Activated naive CD4-positive, alpha-beta T cell treated with anti-CD3 and anti-CD28 coated beads for 36 hours (primary cell): ENCODE measurements at regions of chr7 and their contacts with region 1.

Region 1: DNA sequence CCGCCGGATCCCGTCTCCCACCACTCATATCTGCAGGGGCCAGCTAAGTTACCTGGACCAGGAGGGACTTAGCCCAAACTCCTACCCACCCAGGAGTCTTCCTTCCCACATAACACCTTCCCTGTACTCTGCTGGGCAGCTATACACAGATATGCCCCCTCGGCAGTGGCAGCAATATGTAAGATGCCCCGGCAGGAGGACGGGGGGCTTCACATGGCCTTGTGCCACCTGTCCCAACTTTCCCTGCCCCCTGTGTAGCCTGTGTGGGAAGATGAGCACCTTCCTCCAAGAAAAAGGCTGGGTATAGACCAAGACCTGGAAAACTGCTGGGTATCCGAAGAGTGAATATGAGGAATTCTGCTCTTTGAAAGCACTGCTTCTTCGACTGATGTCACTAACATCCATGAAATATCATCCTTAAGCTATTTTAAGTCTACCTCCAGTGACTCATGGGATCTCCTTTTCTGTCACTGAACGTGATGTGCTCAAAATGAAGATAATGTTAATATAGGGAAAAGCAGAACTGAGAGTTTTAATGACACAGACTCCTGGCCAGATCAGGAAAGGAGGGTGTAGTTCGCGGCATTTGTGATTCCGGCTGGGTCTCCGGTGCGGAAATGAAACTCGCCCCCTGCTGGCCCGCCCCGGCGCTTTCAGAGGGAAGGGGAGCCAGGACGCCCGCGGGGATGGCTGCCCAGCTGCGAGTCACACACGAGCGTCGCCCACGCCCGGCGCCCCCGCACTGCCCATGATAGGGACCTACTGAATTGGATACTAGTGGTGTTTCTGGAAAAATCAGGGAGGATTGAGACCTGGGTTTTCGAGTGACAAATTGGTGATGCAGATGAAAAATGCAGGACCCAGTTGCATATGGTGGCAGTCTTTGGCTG is 256.9 kb upstream of the NFE2L3 start:
- DNase-seq: peak; percentile 74
- H3K4me3 Mint-ChIP-seq: peak overlapping the region; percentile 6
- H3K27ac Mint-ChIP-seq: no peak overlapping the region
- H3K4me1 Mint-ChIP-seq: peaks cover 25% of the 10 kb centered on the region
- H3K27me3 Mint-ChIP-seq: peaks cover under 1% of the 10 kb centered on the region

Region 2: DNA sequence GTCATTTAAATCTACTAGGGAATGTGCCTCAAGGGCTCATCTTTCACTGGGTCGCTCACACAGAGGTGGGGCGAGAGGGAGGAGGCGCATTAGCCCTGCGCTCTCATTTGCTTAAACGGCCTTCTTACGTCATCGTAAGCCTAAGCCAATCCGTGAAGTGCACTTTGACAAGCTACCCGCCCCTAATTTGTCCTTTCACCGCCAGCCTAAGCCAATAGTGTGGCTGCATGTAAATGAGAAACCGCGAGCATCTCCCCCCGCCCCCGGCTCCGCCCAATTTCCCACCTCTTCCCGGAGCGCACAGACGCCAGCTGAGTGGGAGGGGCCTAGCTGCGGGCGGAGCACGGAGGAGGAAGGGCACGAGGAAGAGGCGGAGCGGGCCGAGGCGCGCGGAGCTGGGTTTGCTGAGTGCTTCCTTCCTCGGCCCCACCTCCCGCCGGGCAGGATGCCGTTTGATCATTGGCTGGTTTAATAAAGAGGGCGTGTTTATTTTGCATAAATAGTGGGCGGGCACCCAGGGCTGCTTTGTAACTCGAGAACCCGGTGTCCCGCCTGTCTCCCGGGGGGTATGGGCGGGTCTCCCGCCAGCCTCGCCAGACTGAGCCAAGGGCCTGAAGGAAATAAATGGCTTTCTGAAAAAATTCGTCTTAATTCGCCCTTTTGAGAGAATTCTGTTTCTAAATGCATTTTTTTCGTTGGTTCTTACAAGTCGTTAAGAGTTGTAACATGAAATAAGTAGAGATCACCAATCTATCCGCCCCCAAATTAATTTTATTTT is 32.7 kb before region 1 on chr7:
- CTCF ChIA-PET with region 1: interaction called, 5 read pairs
- intact Hi-C with region 1: loop called (anchors 2 kb)
- DNase-seq: peak; percentile 99
- H3K4me3 Mint-ChIP-seq: peak overlapping the region; percentile 58
- H3K27ac Mint-ChIP-seq: peak overlapping the region; percentile 38
- H3K4me1 Mint-ChIP-seq: peaks cover 22% of the 10 kb centered on the region
- H3K27me3 Mint-ChIP-seq: peaks cover 70% of the 10 kb centered on the region

Region 3: GRCh38 chr7:25923741-25924460 is 28.8 kb after region 1 on chr7:
- CTCF ChIA-PET with region 1: no interaction called
- intact Hi-C with region 1: no loop called
- DNase-seq: no peak
- H3K4me3 Mint-ChIP-seq: no peak overlapping the region
- H3K27ac Mint-ChIP-seq: no peak overlapping the region
- H3K4me1 Mint-ChIP-seq: no peaks in the 10 kb centered on the region
- H3K27me3 Mint-ChIP-seq: peaks cover 3% of the 10 kb centered on the region

Region 4: GRCh38 chr7:25940086-25940906 is 45.1 kb after region 1 on chr7:
- CTCF ChIA-PET with region 1: interaction called, 4 read pairs
- intact Hi-C with region 1: loop called (anchors 2 kb)
- DNase-seq: no peak
- H3K4me3 Mint-ChIP-seq: peak overlapping the region; percentile 12
- H3K27ac Mint-ChIP-seq: peak overlapping the region; percentile 26
- H3K4me1 Mint-ChIP-seq: peaks cover 12% of the 10 kb centered on the region
- H3K27me3 Mint-ChIP-seq: peaks cover 4% of the 10 kb centered on the region

Region 5: GRCh38 chr7:26078437-26079336 is 183.5 kb after region 1 on chr7:
- CTCF ChIA-PET with region 1: interaction called, 15 read pairs
- intact Hi-C with region 1: loop called (anchors 5 kb)
- DNase-seq: peak; percentile 89
- H3K4me3 Mint-ChIP-seq: no peak overlapping the region
- H3K27ac Mint-ChIP-seq: no peak overlapping the region
- H3K4me1 Mint-ChIP-seq: peaks cover 3% of the 10 kb centered on the region
- H3K27me3 Mint-ChIP-seq: peaks cover 17% of the 10 kb centered on the region

Region 6: DNA sequence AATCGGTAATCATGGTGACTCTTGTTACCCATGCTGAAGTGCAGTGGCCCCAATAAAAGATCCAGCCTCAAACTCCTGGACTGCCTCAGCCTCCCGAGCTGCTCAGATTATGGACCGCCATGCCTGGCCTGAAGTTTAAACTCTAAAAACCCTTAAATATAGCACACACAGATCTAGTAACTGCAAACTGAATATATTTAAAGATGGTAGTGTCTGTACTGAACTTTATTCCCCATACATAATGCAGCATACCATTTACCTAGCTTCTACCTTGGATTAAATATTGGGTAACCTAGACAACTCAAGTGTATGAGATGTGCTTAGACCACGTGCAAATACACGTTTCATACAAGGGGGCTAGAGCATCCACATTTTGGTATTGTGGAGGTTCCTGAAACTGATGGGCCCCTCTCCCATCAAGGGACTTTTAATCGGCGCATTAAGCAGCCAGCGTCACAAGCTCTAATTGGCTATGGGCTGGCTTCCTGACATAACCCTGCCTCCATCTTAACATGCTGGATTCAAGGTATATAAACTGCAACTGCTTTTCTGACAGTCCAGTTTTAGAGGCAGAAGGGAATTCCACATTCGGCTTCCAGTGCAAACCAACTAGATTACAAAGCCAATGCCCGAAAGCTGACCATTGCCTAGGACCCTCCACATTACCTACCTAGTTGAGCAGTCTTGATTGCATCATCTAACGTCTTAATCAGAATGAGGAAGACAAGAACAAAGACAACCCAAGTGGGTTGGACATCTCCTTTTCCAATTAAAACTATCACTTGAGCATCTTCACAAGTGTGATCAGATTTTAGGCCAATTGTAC is 292.4 kb after region 1 on chr7:
- CTCF ChIA-PET with region 1: interaction called, 8 read pairs
- intact Hi-C with region 1: loop called (anchors 5 kb)
- DNase-seq: peak; percentile 47
- H3K4me3 Mint-ChIP-seq: no peak overlapping the region
- H3K27ac Mint-ChIP-seq: peak overlapping the region; percentile 85
- H3K4me1 Mint-ChIP-seq: peaks cover 75% of the 10 kb centered on the region
- H3K27me3 Mint-ChIP-seq: no peaks in the 10 kb centered on the region

Region 7: DNA sequence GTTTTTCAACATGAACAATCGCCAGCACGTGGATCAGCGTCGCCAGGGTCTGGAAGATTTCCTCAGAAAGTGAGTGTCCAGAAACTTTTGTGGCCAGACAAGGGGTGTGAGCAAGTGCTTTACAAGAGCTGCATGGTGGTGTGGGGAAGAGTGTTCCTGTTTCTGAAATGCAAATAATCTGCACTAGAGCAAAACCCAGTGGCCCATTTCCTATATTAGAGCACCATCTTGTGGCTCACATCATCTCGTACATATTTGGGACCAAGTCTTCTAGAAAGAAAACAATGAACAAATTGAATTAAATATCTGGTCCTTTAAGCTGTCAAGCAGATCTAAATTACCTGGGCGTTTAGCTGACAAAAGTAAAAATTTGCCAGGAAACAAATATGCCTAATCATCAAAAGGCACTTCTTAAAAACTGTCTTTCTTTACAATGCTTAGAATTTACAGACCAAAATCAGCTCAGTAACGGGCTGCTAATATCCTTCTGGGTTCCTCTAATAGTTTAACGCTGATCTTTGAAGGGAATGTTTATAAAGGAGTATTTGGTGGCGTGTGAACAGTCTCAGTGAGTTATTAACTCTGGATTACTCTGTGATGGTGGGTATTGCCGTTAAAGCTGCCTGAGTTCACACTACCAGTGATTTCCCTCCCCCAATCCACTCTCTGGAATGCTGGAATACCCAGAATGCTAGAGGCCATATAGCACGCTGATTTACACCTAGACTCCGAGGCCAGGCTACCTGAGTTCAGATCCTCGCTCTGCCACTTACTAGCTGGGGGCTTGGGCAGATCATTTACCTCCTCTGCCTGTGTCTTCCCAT is 470.1 kb after region 1 on chr7:
- CTCF ChIA-PET with region 1: interaction called, 20 read pairs
- intact Hi-C with region 1: loop called (anchors 1 kb)
- DNase-seq: peak; percentile 71
- H3K4me3 Mint-ChIP-seq: no peak overlapping the region
- H3K27ac Mint-ChIP-seq: no peak overlapping the region
- H3K4me1 Mint-ChIP-seq: peaks cover 9% of the 10 kb centered on the region
- H3K27me3 Mint-ChIP-seq: no peaks in the 10 kb centered on the region

Region 8: GRCh38 chr7:26686448-26686981 is 791.4 kb after region 1 on chr7:
- CTCF ChIA-PET with region 1: interaction called, 5 read pairs
- intact Hi-C with region 1: loop called (anchors 5 kb)
- DNase-seq: peak; percentile 7
- H3K4me3 Mint-ChIP-seq: no peak overlapping the region
- H3K27ac Mint-ChIP-seq: no peak overlapping the region
- H3K4me1 Mint-ChIP-seq: no peaks in the 10 kb centered on the region
- H3K27me3 Mint-ChIP-seq: peaks cover 20% of the 10 kb centered on the region

Region 9: GRCh38 chr7:26782501-26782900 is 887.4 kb after region 1 on chr7:
- CTCF ChIA-PET with region 1: no interaction called
- intact Hi-C with region 1: no loop called
- DNase-seq: no peak
- H3K4me3 Mint-ChIP-seq: no peak overlapping the region
- H3K27ac Mint-ChIP-seq: no peak overlapping the region
- H3K4me1 Mint-ChIP-seq: no peaks in the 10 kb centered on the region
- H3K27me3 Mint-ChIP-seq: peaks cover 7% of the 10 kb centered on the region